A549 (cell line): ENCODE measurements at regions of chr22 and their contacts with region 1.

Region 1: GRCh38 chr22:30235687-30236170 is 10.8 kb downstream of the LIF start:
- DNase-seq: peak; percentile 74 to 90
- ATAC-seq: peak; percentile 52 to 69
- H3K4me3 ChIP-seq: no peak overlapping the region
- H3K27ac ChIP-seq: peak overlapping the region; percentile 99 to 100
- H3K4me1 ChIP-seq: peaks cover 78% of the 10 kb centered on the region
- CTCF ChIP-seq: no peak
- EP300 ChIP-seq: peak; percentile 47 to 92; a peak in 2 of 5 replicates
- POLR2A ChIP-seq: no peak
- RAD21 ChIP-seq: peak in 1 of 2 experiments; percentile 37; a peak in 1 of 5 replicates

Region 2: DNA sequence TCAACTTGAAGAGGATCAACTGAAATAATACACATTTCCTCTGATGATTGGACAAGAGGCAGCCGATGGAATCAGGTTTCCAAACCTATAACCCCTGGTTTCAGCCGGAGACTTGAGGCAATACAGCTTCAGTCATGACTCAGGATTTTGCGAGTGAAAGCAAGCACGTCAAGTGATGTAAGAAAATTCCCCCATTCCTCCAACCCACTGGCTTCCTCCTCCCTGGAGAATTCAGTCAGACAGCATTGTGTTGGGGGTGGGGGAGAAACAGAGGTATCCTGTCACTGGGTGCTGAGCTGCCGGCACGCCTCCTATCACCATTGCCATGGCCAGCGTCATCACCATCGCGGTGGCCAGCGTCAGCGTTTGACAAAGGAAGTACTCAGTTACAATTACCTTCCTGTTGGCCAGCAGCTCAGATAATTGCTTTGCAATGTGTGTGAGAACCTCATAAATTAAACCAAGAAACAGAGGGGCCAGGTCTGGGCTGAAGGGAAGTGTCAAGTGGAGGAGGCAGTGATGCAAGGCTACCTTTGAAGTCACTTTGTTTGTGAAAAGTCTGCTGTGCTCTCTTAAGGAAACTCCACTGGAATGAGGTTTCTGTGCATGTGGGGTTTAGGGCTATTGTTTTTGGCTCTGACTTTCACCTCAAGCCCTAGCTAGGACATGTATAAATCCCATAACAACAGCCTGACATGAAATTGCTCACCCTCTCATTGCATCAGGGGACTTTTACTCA is 39.4 kb before region 1 on chr22:
- CTCF ChIA-PET with region 1: no interaction called
- POLR2A ChIA-PET with region 1: interaction called, 10 read pairs
- DNase-seq: peak; percentile 83 to 100
- ATAC-seq: peak; percentile 87 to 91
- H3K4me3 ChIP-seq: no peak overlapping the region
- H3K27ac ChIP-seq: peak overlapping the region; percentile 95 to 100
- H3K4me1 ChIP-seq: peaks cover 70% of the 10 kb centered on the region
- CTCF ChIP-seq: no peak
- EP300 ChIP-seq: peak; percentile 96 to 99; a peak in 4 of 5 replicates
- POLR2A ChIP-seq: no peak
- RAD21 ChIP-seq: peak in 1 of 2 experiments; percentile 36; a peak in 3 of 5 replicates

Region 3: DNA sequence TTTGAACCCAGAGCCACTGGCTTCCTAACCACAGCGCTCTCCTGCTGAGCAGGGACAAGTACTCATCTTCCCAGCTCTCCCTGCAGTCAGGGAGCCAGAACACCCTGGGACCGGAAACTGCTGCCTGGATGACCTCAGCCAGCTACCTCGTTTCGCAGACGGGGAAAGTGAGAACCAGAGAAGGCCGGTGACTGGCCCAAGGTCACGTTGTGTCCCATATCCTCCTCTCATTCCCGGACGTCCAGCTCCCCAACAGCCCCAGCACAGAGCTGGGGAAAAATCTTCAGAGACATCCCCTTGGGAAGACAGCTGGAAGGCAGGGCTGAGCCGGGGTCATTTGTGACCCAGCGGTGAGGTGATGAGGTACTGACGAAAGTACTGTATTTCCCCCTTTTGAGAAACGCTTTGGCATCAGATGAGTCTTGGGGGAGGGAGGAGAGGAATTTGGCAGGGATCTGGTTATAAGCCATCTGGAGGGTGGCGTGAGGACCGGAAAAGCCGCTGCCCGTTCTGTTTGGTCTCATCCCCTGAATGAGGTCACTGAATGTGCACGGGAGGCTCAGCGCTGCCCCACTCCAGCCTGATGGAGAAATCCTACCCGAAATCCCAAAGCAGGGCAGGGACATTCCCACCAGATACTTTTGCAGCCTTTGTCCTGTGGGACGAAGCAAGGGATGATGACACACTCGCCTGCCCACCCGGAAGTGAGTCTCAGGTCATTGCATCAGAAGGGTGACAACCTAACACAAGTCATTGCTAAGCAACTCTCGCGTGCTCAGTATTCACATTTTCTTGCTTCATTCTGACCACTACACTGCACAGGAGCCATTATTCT is 30.2 kb before region 1 on chr22:
- CTCF ChIA-PET with region 1: interaction called, 6 read pairs
- POLR2A ChIA-PET with region 1: interaction called, 11 read pairs
- DNase-seq: peak; percentile 91 to 99
- ATAC-seq: peak; percentile 74 to 81
- H3K4me3 ChIP-seq: no peak overlapping the region
- H3K27ac ChIP-seq: peak overlapping the region; percentile 95 to 100
- H3K4me1 ChIP-seq: peaks cover 63% of the 10 kb centered on the region
- CTCF ChIP-seq: no peak
- EP300 ChIP-seq: peak; percentile 98 to 99; a peak in 3 of 5 replicates
- POLR2A ChIP-seq: no peak
- RAD21 ChIP-seq: peak; percentile 4 to 49; a peak in 2 of 5 replicates

Region 4: GRCh38 chr22:30212363-30212995 is 23.2 kb before region 1 on chr22:
- CTCF ChIA-PET with region 1: interaction called, 11 read pairs
- POLR2A ChIA-PET with region 1: interaction called, 10 read pairs
- DNase-seq: peak; percentile 81 to 98
- ATAC-seq: peak; percentile 80 to 87
- H3K4me3 ChIP-seq: no peak overlapping the region
- H3K27ac ChIP-seq: peak overlapping the region; percentile 95 to 100
- H3K4me1 ChIP-seq: peaks cover 81% of the 10 kb centered on the region
- CTCF ChIP-seq: 0 out of 3 replicates have a peak, but pooled peaks have one; percentile 12
- EP300 ChIP-seq: peak; percentile 99
- POLR2A ChIP-seq: no peak
- RAD21 ChIP-seq: peak; percentile 67 to 68